ENCODE measurements at regions of chr2 and their contacts with region 1.

Region 1: DNA sequence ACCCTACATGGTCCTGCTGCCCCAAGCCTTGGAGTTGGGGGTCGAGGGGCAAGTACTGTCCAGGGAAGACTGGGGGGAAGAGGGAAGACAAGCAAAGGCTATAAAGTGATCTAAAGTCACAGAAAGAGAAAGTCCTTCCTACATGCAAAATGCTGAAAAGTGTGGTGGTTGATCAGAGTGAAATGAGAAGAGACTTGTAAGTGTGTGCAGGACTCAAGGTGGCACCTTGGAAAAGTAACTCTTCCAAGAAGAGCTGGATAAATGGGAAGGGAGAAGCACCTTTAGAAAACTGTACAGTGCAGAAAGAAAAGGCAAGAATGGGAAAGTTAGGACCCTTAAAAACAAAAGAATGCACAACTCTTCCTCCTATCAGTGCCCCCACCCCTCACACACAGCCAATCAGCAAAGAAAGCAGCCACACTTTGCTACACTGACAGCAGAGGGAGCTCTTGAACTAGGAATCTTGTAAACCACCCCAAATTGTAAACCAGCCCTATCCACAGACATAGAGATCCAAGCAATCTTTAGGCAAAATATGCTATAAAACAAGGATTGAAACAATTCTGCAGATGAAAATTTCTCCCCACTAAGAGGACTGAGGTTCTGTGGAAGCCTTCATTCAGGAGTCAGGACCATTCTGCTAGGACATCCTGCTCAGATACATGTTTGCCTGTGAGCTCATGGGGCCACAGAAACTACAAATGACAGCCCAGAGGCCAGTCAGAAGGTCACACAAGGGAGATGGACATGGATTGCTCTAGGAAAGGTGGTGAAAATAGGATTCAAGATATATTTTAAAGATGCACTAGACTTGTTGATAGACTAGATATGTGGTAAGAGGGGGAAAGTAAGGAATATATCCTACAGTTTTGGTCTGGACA is 146.4 kb downstream of the FTCDNL1 start:
- DNase-seq: peak; percentile 73
- H3K4me3 ChIP-seq: no peak overlapping the region
- H3K27ac ChIP-seq: no peak overlapping the region
- H3K4me1 ChIP-seq: no peaks in the 10 kb centered on the region
- H3K27me3 ChIP-seq: no peaks in the 10 kb centered on the region
- CTCF ChIP-seq: peak; percentile 63

Region 2: DNA sequence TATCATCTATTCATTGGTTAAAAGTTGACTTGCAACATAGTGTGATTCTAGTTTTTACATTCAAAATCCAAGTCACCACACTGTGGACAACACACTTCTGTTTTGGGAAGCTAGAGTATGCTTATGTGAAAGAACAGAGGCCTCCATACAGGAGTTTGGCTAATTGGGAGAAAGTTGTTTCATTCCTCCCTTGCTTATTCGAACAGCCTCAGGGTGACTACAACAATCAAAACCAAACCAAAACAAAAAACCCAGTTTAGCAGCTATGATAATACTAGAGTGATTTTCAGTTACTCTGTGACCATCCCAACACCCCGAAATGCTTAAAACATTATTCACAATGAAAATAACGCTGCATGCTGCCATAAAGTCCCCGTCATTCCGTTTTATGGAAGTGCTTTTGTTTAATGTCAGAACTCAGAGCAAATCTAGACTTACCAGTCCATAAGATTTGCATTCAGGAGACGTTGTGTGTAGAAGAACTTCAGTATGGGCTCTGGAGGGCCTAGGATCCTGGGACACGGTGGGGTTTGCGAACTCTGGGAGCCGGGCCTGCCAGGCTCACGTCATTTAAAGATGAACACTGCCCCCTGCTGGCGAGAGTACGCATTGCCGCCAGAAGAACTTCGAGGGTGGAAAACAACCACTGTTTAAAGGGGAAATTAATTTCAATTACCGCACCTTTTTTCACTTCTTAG is 35.0 kb after region 1 on chr2:
- intact Hi-C with region 1: loop called (anchors 5 kb)
- DNase-seq: peak; percentile 88
- H3K4me3 ChIP-seq: no peak overlapping the region
- H3K27ac ChIP-seq: peak overlapping the region; percentile 57
- H3K4me1 ChIP-seq: peaks cover 8% of the 10 kb centered on the region
- H3K27me3 ChIP-seq: no peaks in the 10 kb centered on the region
- CTCF ChIP-seq: peak; percentile 98

Region 3: DNA sequence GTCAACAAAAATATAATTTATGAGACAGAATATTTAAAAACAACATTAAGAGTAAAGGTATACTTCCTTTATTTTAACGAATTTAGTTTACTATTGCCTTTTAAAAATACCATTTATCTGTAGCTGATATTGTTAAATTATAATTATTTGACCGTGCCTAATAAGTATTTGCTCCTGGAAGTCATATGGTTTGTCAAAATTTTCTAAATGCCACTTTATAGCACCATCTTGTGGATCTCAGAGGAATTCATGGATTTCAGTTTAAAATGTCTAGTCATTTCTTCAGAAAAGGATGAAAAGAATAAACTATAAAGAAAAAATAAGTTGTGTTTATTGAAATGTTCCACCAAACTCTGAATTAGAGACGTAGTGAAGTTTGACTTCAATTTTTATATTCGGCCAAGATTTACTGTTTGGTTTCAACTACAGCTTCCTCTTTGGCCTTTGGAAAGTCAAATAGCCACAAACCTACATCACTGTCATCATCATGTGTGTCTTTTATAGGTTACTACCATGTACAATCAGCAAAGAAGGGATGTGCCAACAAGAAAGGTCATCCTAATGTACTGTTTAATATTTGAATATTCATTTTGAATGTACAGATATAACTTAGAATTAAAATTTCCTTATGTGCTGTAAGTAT is 156.7 kb after region 1 on chr2:
- intact Hi-C with region 1: loop called (anchors 2 kb)
- DNase-seq: no peak
- H3K4me3 ChIP-seq: no peak overlapping the region
- H3K27ac ChIP-seq: no peak overlapping the region
- H3K4me1 ChIP-seq: no peaks in the 10 kb centered on the region
- H3K27me3 ChIP-seq: no peaks in the 10 kb centered on the region
- CTCF ChIP-seq: peak; percentile 50

Measured in colonic mucosa (tissue), 4 donors.